ENCODE measurements at regions of chr12 and their contacts with region 1.

Region 1: GRCh38 chr12:96120359-96121100 is 73.6 kb upstream of the ELK3 start:
- DNase-seq: peak; percentile 33
- H3K4me3 ChIP-seq: no peak overlapping the region
- H3K27ac ChIP-seq: no peak overlapping the region
- H3K4me1 ChIP-seq: peaks cover 0 to 9% (median 3%) of the 10 kb centered on the region in 4 donors
- H3K27me3 ChIP-seq: peaks cover 5% of the 10 kb centered on the region
- CTCF ChIP-seq: no peak
- EP300 ChIP-seq: no peak
- POLR2A ChIP-seq: no peak

Region 2: GRCh38 chr12:96078231-96079135 is 42.0 kb before region 1 on chr12:
- in situ Hi-C with region 1: no loop called
- intact Hi-C with region 1: loop called (anchors 1 kb)
- DNase-seq: no peak
- H3K4me3 ChIP-seq: no peak overlapping the region
- H3K27ac ChIP-seq: no peak overlapping the region
- H3K4me1 ChIP-seq: peaks cover 0 to 3% (median 0%) of the 10 kb centered on the region in 4 donors
- H3K27me3 ChIP-seq: no peaks in the 10 kb centered on the region
- CTCF ChIP-seq: no peak
- EP300 ChIP-seq: no peak
- POLR2A ChIP-seq: no peak